Gastrocnemius medialis (tissue), 4 donors: ENCODE measurements at regions of chr1 and their contacts with region 1.

Region 1: GRCh38 chr1:150979092-150980056 is 2.7 kb upstream of the ANXA9 start:
- DNase-seq: peak; percentile 65 to 84
- ATAC-seq: peak; percentile 45 to 55
- H3K4me3 ChIP-seq: peak overlapping the region in 1 of 4 donors; percentile 19
- H3K27ac ChIP-seq: peak overlapping the region; percentile 40 to 86 (median 47)
- H3K4me1 ChIP-seq: peaks cover 18 to 20% of the 10 kb centered on the region in 2 donors
- H3K27me3 ChIP-seq: no peaks in the 10 kb centered on the region
- CTCF ChIP-seq: peak; percentile 96 to 99 (median 98)
- POLR2A ChIP-seq: no peak

Region 2: DNA sequence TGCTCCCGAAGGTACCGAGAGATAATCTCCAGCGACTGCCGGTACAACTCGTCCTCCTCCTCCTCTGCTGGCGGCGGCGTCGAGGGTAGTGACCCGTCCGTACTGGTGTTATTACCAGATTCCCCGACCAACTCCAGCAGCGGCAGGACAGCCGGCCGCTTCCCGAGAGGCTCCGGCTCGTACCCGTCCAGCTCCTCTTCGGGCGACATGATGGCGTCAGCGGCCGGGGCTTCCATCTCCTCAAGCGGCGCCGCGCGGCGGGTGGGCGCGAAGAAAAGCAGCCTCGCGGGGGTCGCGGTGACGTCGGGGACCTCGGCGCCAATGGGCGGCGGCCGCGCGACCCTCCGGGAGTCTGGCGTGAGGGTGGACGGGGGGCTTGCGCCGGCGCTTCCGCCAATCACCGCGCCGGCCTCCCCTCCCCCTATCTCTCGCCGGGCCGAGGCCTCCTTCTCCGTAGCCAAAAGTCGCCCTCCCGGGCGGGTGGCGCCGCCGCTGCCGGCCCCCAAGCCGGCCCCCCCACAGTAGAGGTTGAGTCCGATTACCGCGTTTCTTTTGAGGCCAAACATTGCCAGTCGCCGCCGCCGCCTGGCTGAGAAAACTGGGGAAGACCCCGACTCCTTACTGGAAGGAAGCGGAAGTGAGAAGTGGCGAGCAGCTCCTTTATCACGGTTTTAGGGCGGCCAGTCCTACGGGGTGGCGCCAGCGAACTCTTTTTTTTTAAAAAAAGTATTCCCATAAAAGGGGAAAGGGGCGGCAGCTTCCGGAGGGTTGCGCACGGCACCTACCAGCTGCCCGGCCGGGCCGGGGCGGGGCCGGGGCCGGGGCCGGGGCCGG is 400.2 kb before region 1 on chr1 and contains the start of gene MCL1:
- in situ Hi-C with region 1: no loop called
- intact Hi-C with region 1: loop called (anchors 1 kb)
- DNase-seq: peak; percentile 94 to 95
- ATAC-seq: peak; percentile 68 to 71
- H3K4me3 ChIP-seq: peak within 1 kb of the TSS; percentile 67 to 98 (median 84)
- H3K27ac ChIP-seq: peak within 1 kb of the TSS; percentile 100
- H3K4me1 ChIP-seq: peaks cover 21 to 25% of the 10 kb centered on the region in 2 donors
- H3K27me3 ChIP-seq: no peaks in the 10 kb centered on the region
- CTCF ChIP-seq: peak in 2 of 5 experiments; percentile 27 to 32
- POLR2A ChIP-seq: peak; percentile 98 to 99
- total RNA-seq, gene MCL1: 136 to 199 (median 176) TPM

Region 3: GRCh38 chr1:150696590-150697524 is 282.5 kb before region 1 on chr1 and contains the start of gene GOLPH3L:
- in situ Hi-C with region 1: no loop called
- intact Hi-C with region 1: loop called (anchors 5 kb)
- DNase-seq: peak; percentile 97 to 98
- ATAC-seq: peak; percentile 100
- H3K4me3 ChIP-seq: peak within 1 kb of the TSS; percentile 77 to 82 (median 80)
- H3K27ac ChIP-seq: peak within 1 kb of the TSS; percentile 76 to 89 (median 83)
- H3K4me1 ChIP-seq: peaks cover 9 to 18% of the 10 kb centered on the region in 2 donors
- H3K27me3 ChIP-seq: no peaks in the 10 kb centered on the region
- CTCF ChIP-seq: peak in 1 of 5 experiments; percentile 15
- POLR2A ChIP-seq: peak; percentile 32 to 58
- total RNA-seq, gene GOLPH3L: 9.8 to 18.6 (median 15.7) TPM

Region 4: DNA sequence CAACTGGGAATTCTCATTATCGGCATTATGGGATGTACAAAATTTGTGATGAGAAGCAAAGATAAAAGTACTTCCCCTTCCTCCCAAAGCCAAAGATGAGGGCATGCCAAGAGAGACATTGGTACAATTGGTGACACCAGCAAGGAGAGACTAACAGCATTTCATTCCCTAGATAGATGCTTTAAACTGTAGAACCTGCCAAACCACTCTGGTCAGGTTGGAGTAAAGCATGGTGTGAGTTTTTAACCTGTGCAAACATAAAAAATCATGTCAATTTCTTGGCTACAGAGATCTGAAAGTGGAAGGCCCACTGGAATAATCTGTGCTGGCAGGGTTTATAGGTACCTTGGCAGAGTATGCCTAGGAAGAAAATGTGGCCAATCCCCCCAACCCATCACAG is 73.0 kb before region 1 on chr1:
- in situ Hi-C with region 1: no loop called
- intact Hi-C with region 1: no loop called
- DNase-seq: no peak
- ATAC-seq: no peak
- H3K4me3 ChIP-seq: no peak overlapping the region
- H3K27ac ChIP-seq: no peak overlapping the region
- H3K4me1 ChIP-seq: no peaks in the 10 kb centered on the region
- H3K27me3 ChIP-seq: no peaks in the 10 kb centered on the region
- CTCF ChIP-seq: no peak
- POLR2A ChIP-seq: no peak

Region 5: GRCh38 chr1:150925816-150926741 is 53.3 kb before region 1 on chr1 and contains the start of gene SETDB1:
- in situ Hi-C with region 1: no loop called
- intact Hi-C with region 1: loop called (anchors 2 kb)
- DNase-seq: peak; percentile 95 to 97
- ATAC-seq: peak; percentile 98 to 99
- H3K4me3 ChIP-seq: peak within 1 kb of the TSS; percentile 82 to 96 (median 91)
- H3K27ac ChIP-seq: peak within 1 kb of the TSS; percentile 91 to 95 (median 92)
- H3K4me1 ChIP-seq: peaks cover 6 to 10% of the 10 kb centered on the region in 2 donors
- H3K27me3 ChIP-seq: no peaks in the 10 kb centered on the region
- CTCF ChIP-seq: peak in 1 of 5 experiments; percentile 16
- POLR2A ChIP-seq: peak; percentile 36 to 41
- total RNA-seq, gene SETDB1: 13.7 to 20.8 (median 17.3) TPM

Region 6: GRCh38 chr1:151008190-151008860 is 29.0 kb after region 1 on chr1 and contains the start of gene PRUNE1:
- in situ Hi-C with region 1: no loop called
- intact Hi-C with region 1: loop called (anchors 5 kb)
- DNase-seq: peak; percentile 93 to 96
- ATAC-seq: peak; percentile 79 to 80
- H3K4me3 ChIP-seq: peak within 1 kb of the TSS; percentile 60 to 91 (median 86)
- H3K27ac ChIP-seq: peak within 1 kb of the TSS; percentile 89 to 95 (median 94)
- H3K4me1 ChIP-seq: peaks cover 54 to 62% of the 10 kb centered on the region in 2 donors
- H3K27me3 ChIP-seq: no peaks in the 10 kb centered on the region
- CTCF ChIP-seq: peak in 4 of 5 experiments; percentile 24 to 33 (median 26)
- POLR2A ChIP-seq: peak; percentile 65 to 72
- total RNA-seq, gene PRUNE1: 24.0 to 35.6 (median 29.1) TPM